ENCODE measurements at regions of chr3 and their contacts with region 1.

Region 1: DNA sequence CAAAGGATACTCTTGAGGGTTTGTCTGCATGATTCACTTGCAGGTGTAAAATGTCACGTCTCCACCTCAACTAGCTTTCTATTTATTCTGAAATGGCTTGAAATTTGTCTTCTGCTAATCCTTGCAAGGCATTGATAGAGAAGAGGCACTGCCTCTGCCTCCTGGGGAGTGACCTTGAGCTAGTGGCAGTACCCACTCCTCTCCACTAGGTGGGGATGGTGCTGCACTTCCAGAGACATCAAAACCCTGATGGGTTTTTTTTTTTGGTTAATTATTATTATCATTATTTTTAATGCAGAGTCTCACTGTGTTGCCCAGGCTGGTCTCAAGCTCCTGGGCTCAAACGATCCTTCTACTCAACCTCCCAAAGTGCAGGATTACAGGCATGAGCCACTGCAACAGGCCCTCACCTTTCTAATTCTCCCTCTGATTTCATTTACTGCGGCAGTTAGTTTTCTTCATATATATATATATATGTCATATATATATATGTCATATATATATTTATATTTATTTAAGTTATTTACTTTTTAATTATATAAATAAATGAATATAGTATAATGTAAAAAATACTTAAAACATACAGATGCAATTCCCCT is 117.6 kb upstream of the EIF1B start:
- DNase-seq: peak; percentile 67
- ATAC-seq: peak; percentile 64
- H3K4me3 Mint-ChIP-seq: no peak overlapping the region
- H3K27ac Mint-ChIP-seq: no peak overlapping the region
- H3K4me1 Mint-ChIP-seq: no peaks in the 10 kb centered on the region
- H3K27me3 Mint-ChIP-seq: peaks cover 1% of the 10 kb centered on the region

Region 2: DNA sequence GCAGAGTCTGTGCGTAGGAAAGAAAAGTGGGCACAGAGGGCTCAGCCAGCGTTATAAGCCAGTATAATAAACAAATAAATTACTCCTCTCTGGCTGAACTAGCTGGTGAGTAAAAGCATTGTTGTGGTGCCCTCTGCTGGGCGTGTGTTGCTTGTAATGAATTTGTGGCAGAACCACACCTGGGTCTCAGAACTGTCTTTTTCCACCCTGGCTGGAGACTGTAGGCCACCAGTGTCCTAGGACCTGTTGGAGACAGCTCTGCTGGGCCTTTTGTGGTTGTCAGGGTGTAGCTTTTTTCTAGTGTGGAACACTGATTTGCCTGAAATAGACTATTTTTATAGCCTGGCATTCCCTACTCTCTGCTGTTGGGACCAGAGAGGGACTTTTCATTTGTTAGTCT is 12.9 kb before region 1 on chr3:
- CTCF ChIA-PET with region 1: interaction called, 21 read pairs
- POLR2A ChIA-PET with region 1: no interaction called
- DNase-seq: peak; percentile 71
- ATAC-seq: no peak
- H3K4me3 Mint-ChIP-seq: no peak overlapping the region
- H3K27ac Mint-ChIP-seq: no peak overlapping the region
- H3K4me1 Mint-ChIP-seq: no peaks in the 10 kb centered on the region
- H3K27me3 Mint-ChIP-seq: peaks cover 3% of the 10 kb centered on the region

Region 3: DNA sequence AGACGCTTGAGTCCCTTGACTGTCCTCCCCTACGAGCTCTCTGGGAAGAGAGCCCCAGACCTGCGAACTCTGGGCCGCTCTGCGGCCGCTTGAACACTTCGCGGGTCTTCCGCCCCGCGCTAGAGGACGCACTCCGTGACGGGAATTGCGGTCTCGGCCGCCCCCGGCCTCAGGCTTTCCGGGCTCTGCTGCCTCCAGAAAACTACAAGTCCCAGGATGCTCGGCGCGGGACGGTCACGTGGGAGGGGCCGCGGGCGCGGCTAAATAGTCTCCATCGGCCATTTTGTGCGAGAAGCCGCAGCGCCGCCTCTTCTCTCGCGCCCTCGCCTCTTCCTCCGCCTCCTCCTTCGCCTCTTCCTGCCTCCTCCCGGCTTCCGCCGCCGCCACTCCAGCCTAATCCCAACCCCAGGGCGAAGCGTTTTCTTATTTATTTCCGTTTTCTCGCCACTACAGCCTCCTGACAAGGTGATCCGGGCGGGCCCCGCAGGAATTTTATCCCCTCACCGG is 117.5 kb after region 1 on chr3 and contains the start of gene EIF1B:
- CTCF ChIA-PET with region 1: interaction called, 127 read pairs
- POLR2A ChIA-PET with region 1: interaction called, 5 read pairs
- DNase-seq: peak; percentile 98
- ATAC-seq: peak; percentile 92
- H3K4me3 Mint-ChIP-seq: peak within 1 kb of the TSS; percentile 100
- H3K27ac Mint-ChIP-seq: peak within 1 kb of the TSS; percentile 97
- H3K4me1 Mint-ChIP-seq: peaks cover 29% of the 10 kb centered on the region
- H3K27me3 Mint-ChIP-seq: no peaks in the 10 kb centered on the region
- total RNA-seq, gene EIF1B: 33.1 to 33.2 TPM

Region 4: DNA sequence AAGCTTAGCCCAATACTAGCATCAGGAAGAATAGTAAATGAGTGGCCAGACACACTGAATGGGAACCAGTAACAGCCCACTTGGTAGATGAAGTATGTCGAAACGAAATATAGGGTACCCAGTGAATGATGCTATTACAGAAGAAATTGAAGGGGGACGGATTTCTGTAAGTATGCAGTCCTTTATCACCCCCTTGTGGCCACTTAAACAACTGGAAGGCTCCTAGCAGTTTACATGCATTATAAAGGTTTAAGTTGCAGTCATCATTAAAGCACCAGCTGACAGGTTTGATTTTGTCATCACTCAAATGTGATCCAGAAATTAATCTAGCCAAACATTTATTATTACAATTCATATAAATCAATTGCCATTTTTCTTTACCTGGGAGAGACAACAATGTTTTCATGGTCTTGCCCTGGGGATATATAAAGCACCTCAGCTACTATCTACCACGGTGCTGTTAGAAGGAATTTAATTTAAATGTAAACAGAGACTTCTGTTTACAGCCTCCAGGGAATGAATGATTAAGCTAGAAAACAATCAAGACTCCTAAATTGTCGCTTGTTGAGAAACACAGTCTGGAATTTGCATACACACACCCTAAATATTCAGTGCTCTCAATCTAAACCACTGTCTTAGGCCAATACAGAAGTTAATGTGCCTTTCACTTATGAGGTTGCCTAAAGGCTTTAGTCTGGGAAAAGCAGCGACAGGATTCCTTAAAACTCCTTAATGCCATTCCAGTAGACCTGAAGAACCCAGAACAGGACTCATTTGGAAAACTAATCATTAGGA is 125.3 kb after region 1 on chr3:
- CTCF ChIA-PET with region 1: interaction called, 127 read pairs
- POLR2A ChIA-PET with region 1: no interaction called
- DNase-seq: peak; percentile 63
- ATAC-seq: peak; percentile 82
- H3K4me3 Mint-ChIP-seq: no peak overlapping the region
- H3K27ac Mint-ChIP-seq: no peak overlapping the region
- H3K4me1 Mint-ChIP-seq: peaks cover 7% of the 10 kb centered on the region
- H3K27me3 Mint-ChIP-seq: no peaks in the 10 kb centered on the region

Measured in activated CD8-positive, alpha-beta T cell treated with anti-CD3 and anti-CD28 coated beads, Interleukin-2, amount 10 ng/mL, durations not matched to agents 7 days and 5 days (primary cell).